BJ (cell line): ENCODE measurements at regions of chr1 and their contacts with region 1.

Region 1: DNA sequence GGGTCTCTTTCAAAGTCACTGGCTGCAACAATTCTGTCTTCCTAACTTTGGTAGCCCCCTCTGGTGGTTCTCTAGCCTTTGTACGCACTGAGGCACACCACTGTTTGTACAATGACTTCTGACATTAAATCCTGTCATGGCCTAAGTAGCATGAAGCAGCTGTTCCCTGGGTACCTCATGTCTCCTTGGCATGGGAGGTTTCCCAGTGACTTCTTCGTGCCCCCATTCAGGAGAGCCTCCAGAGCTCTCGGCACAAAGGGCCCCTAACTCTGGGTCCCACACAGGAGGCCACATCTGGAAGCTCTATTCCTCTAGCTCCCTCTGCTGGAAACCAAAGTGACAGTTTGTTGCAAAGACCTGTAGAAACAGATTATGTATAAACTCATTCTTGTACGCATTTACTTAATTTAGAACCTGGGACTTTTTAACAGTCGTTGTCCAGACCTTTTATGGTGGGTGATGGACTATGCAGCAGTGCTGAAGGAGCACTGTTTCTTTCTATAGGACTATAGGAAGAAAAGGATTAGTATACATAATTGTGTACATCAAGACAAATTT is 13.4 kb downstream of the SWT1 start:
- DNase-seq: no peak
- H3K4me3 ChIP-seq: no peak overlapping the region
- H3K27me3 ChIP-seq: no peaks in the 10 kb centered on the region
- CTCF ChIP-seq: peak; percentile 81

Region 2: GRCh38 chr1:184805667-184806295 is 364.6 kb before region 1 on chr1:
- CTCF ChIA-PET with region 1: interaction called, 27 read pairs
- POLR2A ChIA-PET with region 1: no interaction called
- DNase-seq: no peak
- H3K4me3 ChIP-seq: no peak overlapping the region
- H3K27me3 ChIP-seq: no peaks in the 10 kb centered on the region
- CTCF ChIP-seq: peak; percentile 90

Region 3: GRCh38 chr1:184982002-184982954 is 188.1 kb before region 1 on chr1:
- CTCF ChIA-PET with region 1: interaction called, 68 read pairs
- POLR2A ChIA-PET with region 1: no interaction called
- DNase-seq: no peak
- H3K4me3 ChIP-seq: no peak overlapping the region
- H3K27me3 ChIP-seq: no peaks in the 10 kb centered on the region
- CTCF ChIP-seq: peak; percentile 92

Region 4: DNA sequence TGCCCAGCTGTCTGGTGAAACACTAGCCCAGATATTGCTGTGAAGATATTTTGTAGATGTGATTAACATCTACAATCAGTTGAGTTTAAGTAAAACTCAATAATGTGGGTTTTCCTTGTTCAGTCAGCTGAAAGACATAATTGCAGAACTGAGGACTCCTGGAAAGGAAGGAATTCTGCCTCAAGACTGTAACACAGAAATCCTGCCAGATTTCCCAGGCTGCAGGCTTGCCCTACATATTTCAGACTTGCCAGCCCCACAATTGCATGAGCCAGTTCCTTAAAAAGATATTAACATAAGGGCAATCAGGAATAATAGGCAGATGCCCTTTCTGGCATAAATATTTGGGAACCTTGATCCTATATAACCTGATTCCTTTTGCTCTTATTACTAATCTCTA is 181.9 kb before region 1 on chr1:
- CTCF ChIA-PET with region 1: interaction called, 68 read pairs
- POLR2A ChIA-PET with region 1: no interaction called
- DNase-seq: no peak
- H3K4me3 ChIP-seq: no peak overlapping the region
- H3K27me3 ChIP-seq: no peaks in the 10 kb centered on the region
- CTCF ChIP-seq: no peak

Region 5: GRCh38 chr1:185156854-185157598 is 13.3 kb before region 1 on chr1 and contains the starts of genes SWT1 and TRMT1L:
- CTCF ChIA-PET with region 1: interaction called, 40 read pairs
- POLR2A ChIA-PET with region 1: no interaction called
- DNase-seq: peak; percentile 96
- H3K4me3 ChIP-seq: peak within 1 kb of the TSS; percentile 63
- H3K27me3 ChIP-seq: no peaks in the 10 kb centered on the region
- CTCF ChIP-seq: no peak
- polyA plus RNA-seq, gene SWT1: 0.78 and 1.7 TPM in 2 replicates
- polyA plus RNA-seq, gene TRMT1L: 13.4 and 23.4 TPM in 2 replicates

Region 6: DNA sequence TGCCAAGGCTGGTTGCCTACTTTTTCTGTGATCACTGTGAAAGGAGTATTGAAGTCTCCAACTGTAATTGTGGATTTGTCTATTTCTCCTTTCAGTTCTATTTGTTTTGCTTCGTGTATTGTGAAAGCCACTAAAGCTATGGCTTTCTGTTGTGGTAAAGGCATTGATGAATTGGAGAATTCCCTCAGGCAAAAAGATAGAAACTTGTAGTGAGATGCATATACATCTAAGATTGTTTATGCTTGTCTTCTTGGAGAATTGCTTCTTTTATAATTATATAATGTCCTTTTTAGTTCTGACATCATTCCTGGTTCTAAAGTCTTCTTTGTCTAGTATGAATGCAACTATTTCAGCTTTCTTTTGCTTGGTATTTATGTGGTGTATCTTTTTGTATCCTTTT is 23.4 kb after region 1 on chr1:
- CTCF ChIA-PET with region 1: no interaction called
- POLR2A ChIA-PET with region 1: no interaction called
- DNase-seq: no peak
- H3K4me3 ChIP-seq: no peak overlapping the region
- H3K27me3 ChIP-seq: no peaks in the 10 kb centered on the region
- CTCF ChIP-seq: no peak

Region 7: DNA sequence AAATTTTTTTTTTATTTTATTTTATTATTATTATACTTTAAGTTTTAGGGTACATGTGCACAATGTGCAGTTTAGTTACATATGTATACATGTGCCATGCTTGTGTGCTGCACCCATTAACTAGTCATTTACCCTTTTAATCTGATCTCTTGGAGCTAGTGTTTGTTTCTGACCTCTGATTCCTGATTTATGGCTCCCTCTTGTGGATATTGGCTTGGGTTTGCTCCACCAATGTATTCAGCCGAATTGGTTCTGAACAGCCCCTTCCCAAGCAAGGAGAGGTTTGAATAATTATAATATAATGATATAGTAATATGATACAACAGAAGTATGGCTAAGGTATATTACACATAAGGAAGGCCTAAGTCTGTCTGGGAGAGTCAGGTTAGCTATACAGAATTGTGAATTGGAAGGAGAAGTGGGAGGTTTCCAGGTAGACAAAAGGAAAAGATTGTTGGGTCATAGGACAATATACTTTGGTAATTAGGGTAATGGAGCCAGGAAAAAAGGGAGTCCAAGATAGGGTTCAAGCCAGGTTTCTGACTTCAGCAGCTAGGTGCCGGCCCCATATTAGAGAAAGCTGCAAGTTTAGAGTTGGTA is 510.8 kb after region 1 on chr1:
- CTCF ChIA-PET with region 1: interaction called, 11 read pairs
- POLR2A ChIA-PET with region 1: no interaction called
- DNase-seq: no peak
- H3K4me3 ChIP-seq: no peak overlapping the region
- H3K27me3 ChIP-seq: no peaks in the 10 kb centered on the region; the same call in 1 of the 2 replicates
- CTCF ChIP-seq: peak; percentile 59